ENCODE measurements at regions of chr16 and their contacts with region 1.

Region 1: GRCh38 chr16:47713225-47713595 is 252.1 kb downstream of the PHKB start:
- DNase-seq: peak; percentile 37
- H3K4me3 Mint-ChIP-seq: no peak overlapping the region
- H3K27ac Mint-ChIP-seq: peak overlapping the region; percentile 24
- H3K4me1 Mint-ChIP-seq: peaks cover 30% of the 10 kb centered on the region
- H3K27me3 Mint-ChIP-seq: peaks cover 31% of the 10 kb centered on the region

Region 2: GRCh38 chr16:46822270-46822669 is 890.9 kb before region 1 on chr16:
- intact Hi-C with region 1: loop called (anchors 10 kb)
- DNase-seq: no peak
- H3K4me3 Mint-ChIP-seq: no peak overlapping the region
- H3K27ac Mint-ChIP-seq: no peak overlapping the region
- H3K4me1 Mint-ChIP-seq: peaks cover 29% of the 10 kb centered on the region
- H3K27me3 Mint-ChIP-seq: no peaks in the 10 kb centered on the region

Region 3: GRCh38 chr16:47141773-47142485 is 571.3 kb before region 1 on chr16:
- intact Hi-C with region 1: loop called (anchors 10 kb)
- DNase-seq: peak; percentile 75
- H3K4me3 Mint-ChIP-seq: peak overlapping the region; percentile 79
- H3K27ac Mint-ChIP-seq: no peak overlapping the region
- H3K4me1 Mint-ChIP-seq: peaks cover 18% of the 10 kb centered on the region
- H3K27me3 Mint-ChIP-seq: peaks cover 30% of the 10 kb centered on the region

Region 4: GRCh38 chr16:47460711-47461597 is 252.3 kb before region 1 on chr16 and contains the starts of genes ITFG1 and PHKB:
- intact Hi-C with region 1: loop called (anchors 5 kb)
- DNase-seq: peak; percentile 95
- H3K4me3 Mint-ChIP-seq: peak within 1 kb of the TSS; percentile 98
- H3K27ac Mint-ChIP-seq: peak within 1 kb of the TSS; percentile 94
- H3K4me1 Mint-ChIP-seq: peaks cover 36% of the 10 kb centered on the region
- H3K27me3 Mint-ChIP-seq: no peaks in the 10 kb centered on the region
- total RNA-seq, gene ITFG1: 23.9 and 28.7 TPM in 2 replicates
- total RNA-seq, gene PHKB: 29.7 and 34.6 TPM in 2 replicates

Region 5: GRCh38 chr16:47660540-47660939 is 52.7 kb before region 1 on chr16:
- intact Hi-C with region 1: loop called (anchors 2 kb)
- DNase-seq: no peak
- H3K4me3 Mint-ChIP-seq: no peak overlapping the region
- H3K27ac Mint-ChIP-seq: no peak overlapping the region
- H3K4me1 Mint-ChIP-seq: peaks cover 14% of the 10 kb centered on the region
- H3K27me3 Mint-ChIP-seq: no peaks in the 10 kb centered on the region

Region 6: GRCh38 chr16:48123104-48123788 is 410.0 kb after region 1 on chr16:
- intact Hi-C with region 1: loop called (anchors 10 kb)
- DNase-seq: no peak
- H3K4me3 Mint-ChIP-seq: no peak overlapping the region
- H3K27ac Mint-ChIP-seq: peak overlapping the region; percentile 64
- H3K4me1 Mint-ChIP-seq: peaks cover 20% of the 10 kb centered on the region
- H3K27me3 Mint-ChIP-seq: peaks cover 6% of the 10 kb centered on the region

Region 7: DNA sequence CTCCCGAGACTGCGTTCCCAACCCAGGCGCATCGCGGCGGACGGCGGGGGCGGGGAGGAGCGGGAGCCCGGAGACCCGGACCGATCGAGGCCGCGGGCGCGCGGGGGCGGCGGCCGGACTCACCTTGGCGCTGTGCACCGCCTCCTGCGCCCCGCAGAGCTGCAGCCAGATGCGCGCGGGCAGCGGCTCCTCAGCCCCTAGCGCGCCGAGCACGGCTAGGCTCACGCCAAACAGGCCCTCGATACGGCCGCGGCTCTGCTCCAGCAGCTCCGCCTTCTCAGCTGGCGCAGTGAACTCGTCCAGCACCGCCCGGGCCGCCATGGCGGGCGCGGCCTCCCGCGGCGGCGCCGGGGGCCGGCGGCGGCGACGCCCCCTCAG is 896.4 kb after region 1 on chr16:
- intact Hi-C with region 1: loop called (anchors 5 kb)
- DNase-seq: no peak
- H3K4me3 Mint-ChIP-seq: peak overlapping the region; percentile 89
- H3K27ac Mint-ChIP-seq: peak overlapping the region; percentile 86
- H3K4me1 Mint-ChIP-seq: peaks cover 39% of the 10 kb centered on the region
- H3K27me3 Mint-ChIP-seq: no peaks in the 10 kb centered on the region